Lower leg skin (tissue), 4 donors: ENCODE measurements at regions of chr11 and their contacts with region 1.

Region 1: GRCh38 chr11:1050581-1051355 is 14.2 kb upstream of the MUC6 start:
- DNase-seq: peak; percentile 49 to 93
- H3K4me3 ChIP-seq: no peak overlapping the region
- CTCF ChIP-seq: peak in 1 of 3 donors; percentile 78
- POLR2A ChIP-seq: no peak

Region 2: DNA sequence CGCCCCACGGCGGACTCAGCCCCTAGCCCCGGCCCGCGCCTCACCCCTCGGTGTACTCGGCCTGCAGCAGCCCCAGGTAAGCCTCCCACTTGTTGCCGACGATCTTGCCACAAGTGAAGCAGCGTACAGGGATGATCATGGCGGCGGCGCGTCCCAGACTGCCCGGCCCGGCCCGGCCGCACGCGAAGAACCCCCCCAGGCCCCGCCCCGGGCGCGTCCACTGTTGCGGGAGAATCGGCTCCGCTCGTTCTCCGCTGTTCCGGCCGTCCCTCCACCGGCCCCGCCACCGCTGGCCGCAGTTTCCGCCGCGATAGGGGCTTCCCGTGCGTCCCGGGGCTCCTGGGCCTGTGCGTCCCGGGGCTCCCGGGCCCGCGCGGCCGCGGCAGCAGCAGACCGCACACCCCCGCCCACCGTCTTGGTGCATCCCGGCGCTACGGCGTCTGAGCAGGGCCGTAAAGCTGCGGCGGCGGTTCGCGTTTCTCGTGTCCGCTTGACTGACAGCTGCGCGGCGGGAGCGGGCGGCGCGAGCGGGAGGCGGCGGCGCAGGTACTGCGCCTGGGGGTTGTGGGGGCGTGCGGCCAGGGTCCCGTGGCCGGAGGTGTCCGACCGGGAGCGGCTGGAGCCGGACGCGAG is 208.3 kb before region 1 on chr11 and contains the starts of genes POLR2L and TSPAN4:
- intact Hi-C with region 1: loop called (anchors 5 kb)
- DNase-seq: peak; percentile 87 to 98
- H3K4me3 ChIP-seq: peak within 1 kb of the TSS; percentile 97
- CTCF ChIP-seq: no peak
- POLR2A ChIP-seq: peak in 1 of 2 donors; percentile 68
- total RNA-seq, gene POLR2L: 39.1 to 61.2 (median 51.4) TPM
- total RNA-seq, gene TSPAN4: 57.3 to 88.3 (median 70.7) TPM

Region 3: GRCh38 chr11:924406-925157 is 126.2 kb before region 1 on chr11:
- intact Hi-C with region 1: loop called (anchors 1 kb)
- DNase-seq: peak in 1 of 2 donors; percentile 92
- H3K4me3 ChIP-seq: no peak overlapping the region
- CTCF ChIP-seq: no peak
- POLR2A ChIP-seq: no peak

Region 4: GRCh38 chr11:965206-965775 is 85.5 kb before region 1 on chr11:
- intact Hi-C with region 1: no loop called
- DNase-seq: no peak
- H3K4me3 ChIP-seq: no peak overlapping the region
- CTCF ChIP-seq: no peak
- POLR2A ChIP-seq: no peak